ENCODE measurements at regions of chr6 and their contacts with region 1.

Region 1: DNA sequence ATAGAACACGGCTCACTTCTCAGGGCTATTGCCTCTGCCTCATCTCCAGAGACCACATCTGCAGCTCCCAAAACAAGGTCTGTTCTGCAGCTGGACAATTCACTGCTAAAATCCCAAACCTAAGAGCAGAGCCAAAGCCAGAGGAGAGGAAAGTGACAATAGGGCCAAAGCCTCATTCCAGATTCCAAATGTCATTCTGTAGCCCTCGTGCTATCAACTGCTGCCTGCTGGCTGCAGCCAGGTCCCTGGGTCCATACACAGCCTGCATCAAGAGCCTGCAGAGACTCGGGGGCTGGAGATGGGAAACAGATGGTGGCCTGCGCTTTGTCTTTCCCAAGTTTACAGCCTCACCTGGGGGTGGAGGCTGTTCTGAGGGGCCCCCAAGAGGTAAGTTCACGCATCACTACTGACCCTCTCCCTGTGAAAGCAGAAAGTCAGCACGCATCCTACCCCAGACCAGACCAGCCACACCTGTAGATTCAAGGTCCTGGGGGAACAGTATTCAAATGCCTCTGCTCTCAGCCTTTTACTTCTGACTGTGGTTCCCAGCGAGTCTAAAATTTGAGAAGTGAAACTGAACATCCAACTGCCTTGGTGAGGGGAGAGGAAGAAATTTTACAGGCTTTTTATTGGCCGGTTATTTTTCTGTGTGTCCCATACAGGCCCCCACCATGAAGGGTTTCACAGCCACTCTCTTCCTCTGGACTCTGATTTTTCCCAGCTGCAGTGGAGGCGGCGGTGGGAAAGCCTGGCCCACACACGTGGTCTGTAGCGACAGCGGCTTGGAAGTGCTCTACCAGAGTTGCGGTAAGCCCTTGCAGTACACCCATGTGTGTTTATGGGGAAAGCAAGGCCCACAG is at the start of gene LY86:
- DNase-seq: peak in 6 of 9 donors; percentile 34 to 64 (median 58)
- ATAC-seq: peak; percentile 46
- H3K4me3 ChIP-seq: peak within 1 kb of the TSS; percentile 31
- H3K4me3 Mint-ChIP-seq: peak within 1 kb of the TSS; percentile 74 to 87 (median 79)
- H3K27ac ChIP-seq: peak within 1 kb of the TSS; percentile 72
- H3K27ac Mint-ChIP-seq: peak within 1 kb of the TSS; percentile 81 to 97 (median 94)
- H3K4me1 ChIP-seq: peaks cover 13 to 53% of the 10 kb centered on the region in 2 donors
- H3K4me1 Mint-ChIP-seq: peaks cover 54 to 90% (median 85%) of the 10 kb centered on the region in 7 donors
- H3K27me3 ChIP-seq: no peaks in the 10 kb centered on the region
- H3K27me3 Mint-ChIP-seq: peaks cover 0 to 5% (median 0%) of the 10 kb centered on the region in 5 donors
- total RNA-seq, gene LY86: 1.5 to 19.6 (median 4.5) TPM

Region 2: DNA sequence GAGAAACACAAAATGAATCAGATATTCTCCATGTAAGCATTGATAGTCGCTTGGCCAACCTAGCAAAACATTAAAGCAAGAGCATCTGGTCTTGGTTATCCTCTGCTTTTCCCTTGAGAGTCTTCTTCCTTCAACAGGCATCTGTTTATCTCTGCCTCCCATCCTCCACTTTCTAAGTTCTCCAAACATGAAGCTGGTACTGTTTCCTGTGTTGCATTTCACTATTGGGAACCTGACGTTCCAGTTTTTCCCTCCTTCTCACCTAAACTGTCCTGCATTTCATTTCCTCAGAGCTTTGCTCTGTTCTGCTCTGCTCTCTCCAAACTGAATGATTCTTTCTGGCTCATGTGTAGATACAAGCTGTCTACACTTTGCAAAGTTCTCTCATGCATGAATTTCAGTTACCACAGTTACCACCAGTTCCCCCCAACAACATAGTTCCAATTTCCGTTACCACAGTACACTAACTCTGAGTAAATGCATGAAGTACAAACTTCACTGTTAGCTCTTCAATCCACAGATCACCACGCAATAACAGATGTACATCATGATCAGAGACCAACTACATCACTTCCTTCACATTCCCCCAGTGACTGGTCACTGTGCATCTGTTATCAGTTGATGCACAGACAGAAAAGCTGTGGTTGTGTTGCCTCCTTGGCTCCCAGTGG is 181.1 kb before region 1 on chr6:
- CTCF ChIA-PET with region 1: no interaction called
- POLR2A ChIA-PET with region 1: no interaction called
- intact Hi-C with region 1: no loop called
- DNase-seq: no peak
- ATAC-seq: peak; percentile 80
- H3K4me3 ChIP-seq: no peak overlapping the region
- H3K4me3 Mint-ChIP-seq: no peak overlapping the region
- H3K27ac ChIP-seq: no peak overlapping the region
- H3K27ac Mint-ChIP-seq: no peak overlapping the region
- H3K4me1 ChIP-seq: no peaks in the 10 kb centered on the region
- H3K4me1 Mint-ChIP-seq: no peaks in the 10 kb centered on the region
- H3K27me3 ChIP-seq: peaks cover 0 to 3% of the 10 kb centered on the region in 2 donors
- H3K27me3 Mint-ChIP-seq: peaks cover 0 to 14% (median 6%) of the 10 kb centered on the region in 5 donors

Region 3: DNA sequence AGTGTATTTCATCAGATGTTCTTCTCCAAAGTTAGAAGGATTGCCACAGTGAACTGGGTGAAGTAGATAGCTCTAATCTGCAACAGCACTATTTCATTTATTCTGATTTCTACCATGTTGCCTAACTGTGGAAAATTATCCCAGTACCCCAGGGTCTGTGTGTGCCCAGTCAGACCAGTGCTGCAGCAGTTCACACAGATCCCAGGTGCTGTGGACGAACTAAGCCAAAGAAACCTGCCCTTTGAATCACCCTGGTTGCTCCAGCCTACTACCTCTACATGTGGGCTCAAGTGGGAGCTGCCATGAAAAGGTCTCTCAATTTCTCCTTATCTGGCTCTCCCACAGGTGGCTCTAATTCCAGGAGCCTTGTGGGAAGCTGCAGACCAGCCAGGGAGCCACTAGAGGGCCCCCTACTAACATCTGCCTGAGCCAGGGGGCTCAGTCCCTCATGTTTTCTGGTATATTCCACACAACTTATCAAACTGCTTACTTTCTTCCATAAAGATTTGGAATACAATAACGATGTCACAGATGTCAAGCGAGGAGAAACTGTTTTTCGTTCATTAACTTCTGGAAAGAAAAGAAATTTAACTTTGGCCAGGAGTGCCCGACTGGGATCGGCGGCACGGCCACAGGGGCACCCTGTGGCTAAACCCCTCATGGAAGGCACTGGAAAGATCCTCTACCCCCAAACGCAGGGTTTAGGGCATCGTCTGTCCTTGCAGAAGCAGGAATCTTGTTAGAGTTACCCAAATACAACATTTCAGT is 31.4 kb before region 1 on chr6:
- CTCF ChIA-PET with region 1: interaction called, 5 read pairs
- POLR2A ChIA-PET with region 1: no interaction called
- intact Hi-C with region 1: loop called (anchors 1 to 2 kb)
- DNase-seq: peak in 7 of 9 donors; percentile 30 to 68 (median 57)
- ATAC-seq: peak; percentile 76
- H3K4me3 ChIP-seq: no peak overlapping the region
- H3K4me3 Mint-ChIP-seq: no peak overlapping the region
- H3K27ac ChIP-seq: no peak overlapping the region
- H3K27ac Mint-ChIP-seq: peak overlapping the region in 5 of 9 donors; percentile 19 to 64 (median 32)
- H3K4me1 ChIP-seq: peaks cover 0 to 4% of the 10 kb centered on the region in 2 donors
- H3K4me1 Mint-ChIP-seq: peaks cover 0 to 50% (median 18%) of the 10 kb centered on the region in 7 donors
- H3K27me3 ChIP-seq: no peaks in the 10 kb centered on the region
- H3K27me3 Mint-ChIP-seq: peaks cover 0 to 15% (median 0%) of the 10 kb centered on the region in 5 donors

Region 4: GRCh38 chr6:6599468-6599873 is 11.2 kb after region 1 on chr6:
- CTCF ChIA-PET with region 1: interaction called, 3 read pairs
- POLR2A ChIA-PET with region 1: interaction called, 10 read pairs
- intact Hi-C with region 1: no loop called
- DNase-seq: no peak
- ATAC-seq: no peak
- H3K4me3 ChIP-seq: no peak overlapping the region
- H3K4me3 Mint-ChIP-seq: no peak overlapping the region
- H3K27ac ChIP-seq: no peak overlapping the region
- H3K27ac Mint-ChIP-seq: no peak overlapping the region
- H3K4me1 ChIP-seq: peaks cover 0 to 21% of the 10 kb centered on the region in 2 donors
- H3K4me1 Mint-ChIP-seq: peaks cover 23 to 63% (median 51%) of the 10 kb centered on the region in 7 donors
- H3K27me3 ChIP-seq: no peaks in the 10 kb centered on the region
- H3K27me3 Mint-ChIP-seq: no peaks in the 10 kb centered on the region

Region 5: DNA sequence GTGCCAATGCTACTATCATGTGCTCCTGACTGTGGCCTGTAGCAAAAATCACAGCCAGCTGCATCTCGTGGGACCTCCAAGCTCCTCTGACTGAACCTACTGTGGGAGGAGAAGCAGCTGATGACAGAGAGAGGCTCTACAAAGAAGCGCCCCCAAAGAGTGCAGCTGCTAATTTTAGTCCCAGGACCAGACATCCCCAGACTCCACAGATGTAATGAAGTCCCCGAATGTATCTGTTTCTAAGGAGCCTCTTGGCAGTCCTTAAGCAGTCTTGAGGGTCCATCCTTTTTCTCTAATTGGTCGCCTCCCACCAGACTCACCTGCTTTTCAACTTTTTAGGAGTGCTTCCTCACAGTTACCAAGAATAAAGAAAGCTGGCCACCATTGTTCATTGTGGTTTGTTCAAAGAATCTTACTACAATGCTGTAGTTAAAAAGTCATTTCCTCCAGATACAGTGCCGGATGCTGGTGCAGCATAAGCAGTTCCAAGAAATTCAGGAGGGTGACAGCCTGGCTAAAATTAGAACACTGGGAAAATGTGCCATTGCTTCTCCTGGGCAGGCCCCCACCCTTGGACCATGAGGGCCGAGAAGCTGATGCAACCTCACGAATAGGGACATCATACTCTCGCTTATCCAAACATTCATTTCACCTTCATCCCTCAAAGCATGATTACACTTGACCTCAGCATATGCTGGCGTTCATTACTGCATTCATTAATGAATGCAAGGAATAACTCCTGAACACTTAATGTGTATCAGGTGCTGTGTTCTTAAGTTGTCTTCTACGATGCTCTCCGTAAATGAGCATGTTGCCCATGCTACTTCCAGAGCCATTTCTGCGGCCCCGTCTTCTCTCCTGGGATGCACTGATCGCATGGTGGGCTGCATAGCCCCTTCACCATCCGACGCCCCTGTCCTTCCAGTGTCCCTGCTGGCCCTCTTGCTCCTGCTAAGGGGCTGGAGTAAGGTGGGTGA is 66.6 kb after region 1 on chr6:
- CTCF ChIA-PET with region 1: interaction called, 3 read pairs
- POLR2A ChIA-PET with region 1: interaction called, 6 read pairs
- intact Hi-C with region 1: loop called (anchors 1 to 2 kb)
- DNase-seq: peak in 8 of 9 donors; percentile 25 to 77 (median 60)
- ATAC-seq: peak; percentile 62
- H3K4me3 ChIP-seq: no peak overlapping the region
- H3K4me3 Mint-ChIP-seq: peak overlapping the region; percentile 60 to 85 (median 76)
- H3K27ac ChIP-seq: peak overlapping the region; percentile 45
- H3K27ac Mint-ChIP-seq: peak overlapping the region; percentile 65 to 99 (median 97)
- H3K4me1 ChIP-seq: peaks cover 4 to 67% of the 10 kb centered on the region in 2 donors
- H3K4me1 Mint-ChIP-seq: peaks cover 48 to 94% (median 82%) of the 10 kb centered on the region in 7 donors
- H3K27me3 ChIP-seq: no peaks in the 10 kb centered on the region
- H3K27me3 Mint-ChIP-seq: no peaks in the 10 kb centered on the region

Region 6: DNA sequence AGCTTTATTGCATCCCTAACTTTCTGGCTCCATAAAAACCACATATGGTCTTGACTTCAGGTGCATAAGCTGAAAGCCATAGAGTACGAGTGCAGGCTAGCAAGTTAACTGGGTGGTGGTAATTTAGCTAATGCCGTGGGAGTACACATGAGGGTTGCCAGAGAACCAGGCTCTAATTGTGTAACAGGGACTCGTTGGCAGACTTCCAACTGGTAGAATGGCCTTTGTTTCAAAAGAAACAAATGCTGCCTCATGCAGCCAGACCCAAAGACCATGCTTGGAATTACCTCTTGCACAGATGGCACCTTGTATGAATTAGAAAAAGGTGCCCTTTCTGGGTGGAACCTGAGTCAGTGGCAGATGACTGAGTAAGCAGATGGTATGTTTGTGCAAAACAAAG is 73.4 kb after region 1 on chr6:
- CTCF ChIA-PET with region 1: no interaction called
- POLR2A ChIA-PET with region 1: interaction called, 6 read pairs
- intact Hi-C with region 1: loop called (anchors 1 to 2 kb)
- DNase-seq: no peak
- ATAC-seq: no peak
- H3K4me3 ChIP-seq: no peak overlapping the region
- H3K4me3 Mint-ChIP-seq: peak overlapping the region in 1 of 10 donors; percentile 9
- H3K27ac ChIP-seq: no peak overlapping the region
- H3K27ac Mint-ChIP-seq: peak overlapping the region in 7 of 9 donors; percentile 40 to 99 (median 95)
- H3K4me1 ChIP-seq: peaks cover 0 to 43% of the 10 kb centered on the region in 2 donors
- H3K4me1 Mint-ChIP-seq: peaks cover 25 to 72% (median 65%) of the 10 kb centered on the region in 7 donors
- H3K27me3 ChIP-seq: no peaks in the 10 kb centered on the region
- H3K27me3 Mint-ChIP-seq: no peaks in the 10 kb centered on the region

Region 7: DNA sequence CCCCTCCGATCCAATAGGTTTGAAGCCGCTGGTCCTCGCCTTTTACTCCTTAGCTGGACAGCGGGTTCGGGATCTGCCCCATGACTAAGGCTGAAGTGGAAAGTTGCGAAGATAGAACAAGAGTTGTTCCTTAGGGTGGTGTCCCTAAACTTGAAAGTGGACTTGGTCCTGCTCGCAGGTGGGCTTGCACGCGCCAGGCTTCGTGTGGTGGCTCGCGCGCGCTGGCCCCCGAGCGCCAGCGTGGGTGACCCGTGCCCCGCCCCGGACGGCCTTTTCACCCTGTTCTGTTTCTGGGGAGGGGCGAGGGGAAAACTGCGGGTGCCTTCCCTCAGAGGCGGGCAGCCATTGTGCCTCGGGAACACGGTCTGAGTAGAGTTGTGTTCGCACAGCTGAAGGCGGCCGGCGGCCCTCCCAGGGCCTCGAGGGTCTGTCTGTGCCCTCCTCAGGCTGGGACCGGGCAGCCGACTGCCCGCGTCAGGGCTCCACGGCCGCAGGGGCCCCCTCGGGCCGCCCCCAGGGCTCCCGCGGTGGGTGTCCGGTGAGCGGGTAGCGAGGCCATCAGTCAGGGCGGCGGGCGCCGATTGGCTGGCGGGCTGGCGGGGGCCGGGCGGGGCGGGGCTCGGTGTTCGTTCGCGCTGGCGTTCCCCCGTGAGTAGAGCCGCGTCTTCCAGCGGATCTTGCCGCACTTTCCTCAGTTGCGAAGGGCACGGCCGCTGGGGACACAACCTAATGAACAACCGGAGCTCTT is 552.5 kb after region 1 on chr6:
- CTCF ChIA-PET with region 1: interaction called, 3 read pairs
- POLR2A ChIA-PET with region 1: no interaction called
- intact Hi-C with region 1: loop called in 1 of 2 experiments (anchors 5 kb)
- DNase-seq: peak; percentile 69 to 86 (median 78)
- ATAC-seq: peak; percentile 89
- H3K4me3 ChIP-seq: peak overlapping the region; percentile 73
- H3K4me3 Mint-ChIP-seq: peak overlapping the region; percentile 80 to 92 (median 88)
- H3K27ac ChIP-seq: peak overlapping the region; percentile 91
- H3K27ac Mint-ChIP-seq: peak overlapping the region; percentile 85 to 99 (median 96)
- H3K4me1 ChIP-seq: peaks cover 22 to 51% of the 10 kb centered on the region in 2 donors
- H3K4me1 Mint-ChIP-seq: peaks cover 45 to 91% (median 85%) of the 10 kb centered on the region in 7 donors
- H3K27me3 ChIP-seq: no peaks in the 10 kb centered on the region
- H3K27me3 Mint-ChIP-seq: no peaks in the 10 kb centered on the region